ENCODE measurements at regions of chr17 and their contacts with region 1.

Region 1: GRCh38 chr17:60481604-60482003 is 44.4 kb downstream of the APPBP2 start:
- DNase-seq: no peak
- ATAC-seq: no peak
- H3K4me3 ChIP-seq: no peak overlapping the region
- H3K27ac ChIP-seq: no peak overlapping the region
- H3K4me1 ChIP-seq: no peaks in the 10 kb centered on the region
- H3K27me3 ChIP-seq: no peaks in the 10 kb centered on the region
- CTCF ChIP-seq: no peak

Region 2: DNA sequence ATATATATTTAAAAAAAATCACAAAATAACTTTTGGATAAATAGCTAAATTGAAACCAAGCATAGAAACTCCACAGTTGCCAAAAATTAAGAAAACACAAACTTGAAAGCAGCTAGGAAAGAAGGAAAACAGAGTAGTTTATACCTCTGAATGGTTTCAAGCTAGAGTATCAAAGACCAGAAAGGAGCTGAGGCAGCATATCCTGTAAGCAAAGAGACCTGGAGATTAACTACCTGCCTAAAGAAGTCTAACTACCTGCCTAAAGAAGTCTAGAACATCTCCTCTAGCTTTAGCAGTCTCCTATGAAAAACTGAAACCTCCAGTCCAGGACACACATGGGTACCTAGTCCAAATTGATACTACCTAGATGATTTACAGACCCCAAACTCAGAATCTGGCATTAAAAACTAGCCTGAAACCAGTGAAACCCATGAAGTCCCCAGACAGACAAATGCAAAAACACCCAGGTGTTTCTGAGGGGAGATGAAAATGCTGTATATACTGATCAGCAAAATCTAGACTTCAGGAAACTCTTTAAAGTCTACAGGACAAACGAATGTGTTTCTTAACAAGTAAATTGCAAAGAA is 26.9 kb after region 1 on chr17:
- CTCF ChIA-PET with region 1: interaction called, 9 read pairs
- POLR2A ChIA-PET with region 1: interaction called, 17 read pairs
- in situ Hi-C with region 1: no loop called
- intact Hi-C with region 1: no loop called
- DNase-seq: no peak
- ATAC-seq: no peak
- H3K4me3 ChIP-seq: no peak overlapping the region
- H3K27ac ChIP-seq: no peak overlapping the region
- H3K4me1 ChIP-seq: no peaks in the 10 kb centered on the region
- H3K27me3 ChIP-seq: no peaks in the 10 kb centered on the region
- CTCF ChIP-seq: no peak

Region 3: DNA sequence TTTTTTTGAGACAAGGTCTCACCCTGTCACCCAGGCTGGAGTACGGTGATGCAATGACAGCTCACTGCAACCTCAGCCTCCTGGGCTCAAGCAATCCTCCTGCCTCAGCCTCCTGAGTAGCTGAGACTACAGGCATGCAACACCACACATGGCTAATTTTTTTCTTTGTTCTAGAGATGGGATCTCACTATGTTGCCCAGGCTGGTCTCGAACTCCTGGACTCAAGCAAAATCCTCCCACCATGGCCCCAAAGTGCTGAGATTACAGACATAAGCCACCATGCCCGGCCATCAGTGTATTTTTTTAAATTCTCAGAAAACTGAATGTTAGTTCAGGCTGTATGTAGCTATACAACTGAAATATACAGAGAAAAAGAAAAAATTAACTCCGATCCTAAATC is 38.2 kb after region 1 on chr17:
- CTCF ChIA-PET with region 1: no interaction called
- POLR2A ChIA-PET with region 1: interaction called, 10 read pairs
- in situ Hi-C with region 1: no loop called
- intact Hi-C with region 1: no loop called
- DNase-seq: no peak
- ATAC-seq: no peak
- H3K4me3 ChIP-seq: no peak overlapping the region
- H3K27ac ChIP-seq: no peak overlapping the region
- H3K4me1 ChIP-seq: peaks cover 4% of the 10 kb centered on the region; the same call in 1 of the 2 replicates
- H3K27me3 ChIP-seq: no peaks in the 10 kb centered on the region
- CTCF ChIP-seq: no peak

Measured in Panc1 (cell line).